Activated CD8-positive, alpha-beta T cell treated with anti-CD3 and anti-CD28 coated beads, Interleukin-2, amount 10 ng/mL, durations not matched to agents 7 days and 5 days (primary cell): ENCODE measurements at regions of chr9 and their contacts with region 1.

Region 1: DNA sequence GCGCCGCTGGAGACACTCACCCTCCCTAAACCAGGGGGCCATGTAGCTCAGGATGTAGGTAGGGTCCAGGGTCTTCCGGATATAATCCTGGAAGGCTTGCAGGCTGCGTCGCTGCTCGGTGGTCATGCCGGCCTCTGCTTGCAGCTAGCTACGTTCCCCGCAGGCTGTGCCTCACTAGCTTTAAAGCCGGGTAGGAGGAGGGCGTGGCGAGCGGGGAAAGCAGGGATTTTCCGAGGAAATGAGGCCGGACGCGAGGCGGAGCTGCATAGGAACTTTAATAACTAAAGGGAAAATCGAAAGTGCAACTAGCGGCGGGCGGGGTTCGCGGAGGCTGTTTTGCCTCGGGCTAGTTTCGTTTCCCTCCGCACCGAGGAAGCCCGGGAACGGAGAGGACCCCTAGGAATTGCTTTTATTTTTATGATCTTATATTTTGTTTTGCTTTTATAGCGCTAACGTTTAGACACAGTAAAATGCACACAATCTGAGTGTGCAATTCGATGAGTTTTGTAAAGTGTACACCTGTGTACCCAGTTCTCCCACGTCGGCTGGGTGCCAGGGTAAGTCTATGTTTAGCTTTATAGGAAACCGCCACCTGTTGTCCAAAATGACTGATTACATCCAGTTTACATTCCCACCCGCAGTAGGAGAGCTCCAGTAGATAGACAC is at the start of gene RIGI:
- DNase-seq: peak; percentile 86
- ATAC-seq: peak; percentile 81
- H3K4me3 Mint-ChIP-seq: peak within 1 kb of the TSS; percentile 98
- H3K27ac Mint-ChIP-seq: peak within 1 kb of the TSS; percentile 96
- H3K4me1 Mint-ChIP-seq: peaks cover 57% of the 10 kb centered on the region
- H3K27me3 Mint-ChIP-seq: no peaks in the 10 kb centered on the region
- total RNA-seq, gene RIGI: 19.2 to 19.6 TPM

Region 2: GRCh38 chr9:32218100-32218767 is 307.9 kb before region 1 on chr9:
- CTCF ChIA-PET with region 1: no interaction called
- POLR2A ChIA-PET with region 1: no interaction called
- DNase-seq: no peak
- ATAC-seq: no peak
- H3K4me3 Mint-ChIP-seq: no peak overlapping the region
- H3K27ac Mint-ChIP-seq: no peak overlapping the region
- H3K4me1 Mint-ChIP-seq: no peaks in the 10 kb centered on the region
- H3K27me3 Mint-ChIP-seq: no peaks in the 10 kb centered on the region

Region 3: DNA sequence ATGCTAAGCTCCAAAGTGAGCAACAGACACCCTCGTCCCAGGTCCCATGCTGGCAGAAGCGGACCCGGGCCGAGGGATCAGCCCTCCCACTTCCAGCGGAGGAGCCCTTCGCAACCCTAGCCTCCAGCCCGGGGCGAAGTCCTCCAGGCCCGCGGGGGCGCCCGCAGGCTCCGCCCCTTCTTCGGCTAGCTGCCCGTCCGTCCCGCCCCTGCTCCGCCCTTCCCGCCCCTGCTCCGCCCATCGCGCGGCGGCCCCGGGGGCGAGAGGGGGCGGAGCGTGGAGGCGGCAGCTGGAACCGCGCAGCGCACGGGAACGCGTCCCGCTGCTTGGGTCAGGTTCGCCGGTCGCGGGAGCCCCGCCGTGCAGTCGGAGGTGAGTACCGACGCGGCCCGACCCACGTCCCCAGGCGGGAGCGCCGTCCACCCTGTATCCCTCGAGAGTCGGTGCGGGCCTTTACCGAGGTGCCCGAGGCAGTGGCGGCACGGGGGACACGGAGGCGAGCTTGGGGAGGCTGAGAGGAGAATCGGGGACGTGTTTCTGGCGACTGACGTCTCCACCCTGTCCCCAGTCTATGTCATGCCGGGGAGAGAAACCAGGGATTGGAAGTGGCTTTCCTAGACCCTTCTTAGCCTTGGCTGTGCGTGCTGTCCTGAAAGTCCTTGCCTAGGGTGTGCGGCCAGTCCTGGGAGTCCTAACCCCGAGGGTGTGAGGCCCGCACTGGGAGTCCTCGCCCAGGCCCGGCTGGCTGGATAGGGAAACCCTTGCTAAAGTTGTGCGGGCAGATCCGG is 141.6 kb before region 1 on chr9 and contains the start of gene ACO1:
- CTCF ChIA-PET with region 1: interaction called, 53 read pairs
- POLR2A ChIA-PET with region 1: interaction called, 6 read pairs
- DNase-seq: peak; percentile 87
- ATAC-seq: peak; percentile 98
- H3K4me3 Mint-ChIP-seq: peak within 1 kb of the TSS; percentile 78
- H3K27ac Mint-ChIP-seq: no peak within 1 kb of the TSS
- H3K4me1 Mint-ChIP-seq: peaks cover 11% of the 10 kb centered on the region
- H3K27me3 Mint-ChIP-seq: peaks cover 31% of the 10 kb centered on the region
- total RNA-seq, gene ACO1: 8.6 to 8.8 TPM

Region 4: GRCh38 chr9:32550562-32551433 is 24.6 kb after region 1 on chr9:
- CTCF ChIA-PET with region 1: interaction called, 27 read pairs
- POLR2A ChIA-PET with region 1: interaction called, 44 read pairs
- DNase-seq: peak; percentile 95
- ATAC-seq: peak; percentile 81
- H3K4me3 Mint-ChIP-seq: peak overlapping the region; percentile 89
- H3K27ac Mint-ChIP-seq: peak overlapping the region; percentile 99
- H3K4me1 Mint-ChIP-seq: peaks cover 30% of the 10 kb centered on the region
- H3K27me3 Mint-ChIP-seq: no peaks in the 10 kb centered on the region